PC-3 (cell line): ENCODE measurements at regions of chr14 and their contacts with region 1.

Region 1: GRCh38 chr14:71539650-71540285 is 392.5 kb upstream of the RGS6 start:
- DNase-seq: no peak
- ATAC-seq: no peak
- H3K4me3 ChIP-seq: no peak overlapping the region
- H3K27ac ChIP-seq: no peak overlapping the region
- H3K4me1 ChIP-seq: no peaks in the 10 kb centered on the region
- H3K27me3 ChIP-seq: no peaks in the 10 kb centered on the region
- CTCF ChIP-seq: no peak

Region 2: DNA sequence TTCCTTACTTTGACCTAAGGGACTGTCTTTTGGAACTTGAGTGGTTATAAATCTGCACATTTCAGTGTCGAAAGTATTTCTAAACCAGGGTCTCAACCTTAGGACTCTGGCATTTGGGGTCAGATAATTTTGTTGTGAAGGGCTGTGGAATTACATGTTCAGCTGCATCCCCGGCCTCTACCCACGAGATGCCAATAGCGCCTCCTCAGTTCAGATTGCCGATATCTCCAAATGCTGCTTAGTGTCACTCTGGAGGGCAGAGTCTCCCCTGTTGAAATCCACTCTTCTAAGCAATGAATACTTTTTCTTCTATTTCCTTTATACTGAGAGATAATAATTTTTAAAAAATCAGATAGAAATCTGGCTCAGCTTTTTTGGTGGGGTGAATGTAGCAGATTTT is 13.0 kb after region 1 on chr14:
- CTCF ChIA-PET with region 1: no interaction called
- POLR2A ChIA-PET with region 1: no interaction called
- intact Hi-C with region 1: loop called (anchors 2 kb)
- DNase-seq: no peak
- ATAC-seq: no peak
- H3K4me3 ChIP-seq: no peak overlapping the region
- H3K27ac ChIP-seq: no peak overlapping the region
- H3K4me1 ChIP-seq: no peaks in the 10 kb centered on the region
- H3K27me3 ChIP-seq: no peaks in the 10 kb centered on the region
- CTCF ChIP-seq: peak; percentile 31; the same call in 1 of the 2 replicates

Region 3: DNA sequence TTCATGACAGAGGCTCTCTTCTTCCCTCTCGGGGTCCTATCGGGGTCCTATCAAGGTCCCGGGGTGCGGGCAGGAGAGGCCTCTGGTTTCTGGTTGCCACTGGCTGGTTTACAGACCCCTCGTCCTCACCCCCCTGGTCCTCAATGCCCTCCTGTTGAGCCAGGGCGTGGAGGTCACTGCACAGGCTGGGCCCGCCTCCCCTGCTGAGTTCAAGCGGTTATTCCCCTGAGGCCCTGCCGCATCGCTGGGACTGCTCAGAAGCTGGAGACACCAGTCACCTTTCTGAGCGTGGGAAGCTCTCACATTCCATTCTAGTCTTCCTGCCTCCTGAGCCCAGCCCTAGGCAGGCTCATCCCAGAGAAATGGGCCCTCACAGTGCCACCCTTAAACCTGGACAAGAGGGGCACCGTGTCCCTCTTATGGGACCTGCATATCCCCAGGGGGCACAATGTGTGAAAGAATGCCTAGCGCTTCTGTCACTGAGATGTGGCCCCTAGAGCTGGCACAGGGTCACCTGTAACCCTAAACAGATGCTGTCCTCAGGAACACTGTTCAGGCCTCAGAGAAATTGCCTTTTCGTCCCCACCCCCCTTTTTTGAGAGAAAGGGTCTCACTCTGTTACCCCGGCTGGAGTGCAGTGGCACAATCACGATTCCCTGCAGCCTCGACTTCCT is 214.8 kb after region 1 on chr14:
- CTCF ChIA-PET with region 1: no interaction called
- POLR2A ChIA-PET with region 1: no interaction called
- intact Hi-C with region 1: no loop called
- DNase-seq: no peak
- ATAC-seq: no peak
- H3K4me3 ChIP-seq: no peak overlapping the region
- H3K27ac ChIP-seq: no peak overlapping the region
- H3K4me1 ChIP-seq: peaks cover 5% of the 10 kb centered on the region
- H3K27me3 ChIP-seq: no peaks in the 10 kb centered on the region
- CTCF ChIP-seq: no peak